ENCODE measurements at regions of chr3 and their contacts with region 1.

Region 1: DNA sequence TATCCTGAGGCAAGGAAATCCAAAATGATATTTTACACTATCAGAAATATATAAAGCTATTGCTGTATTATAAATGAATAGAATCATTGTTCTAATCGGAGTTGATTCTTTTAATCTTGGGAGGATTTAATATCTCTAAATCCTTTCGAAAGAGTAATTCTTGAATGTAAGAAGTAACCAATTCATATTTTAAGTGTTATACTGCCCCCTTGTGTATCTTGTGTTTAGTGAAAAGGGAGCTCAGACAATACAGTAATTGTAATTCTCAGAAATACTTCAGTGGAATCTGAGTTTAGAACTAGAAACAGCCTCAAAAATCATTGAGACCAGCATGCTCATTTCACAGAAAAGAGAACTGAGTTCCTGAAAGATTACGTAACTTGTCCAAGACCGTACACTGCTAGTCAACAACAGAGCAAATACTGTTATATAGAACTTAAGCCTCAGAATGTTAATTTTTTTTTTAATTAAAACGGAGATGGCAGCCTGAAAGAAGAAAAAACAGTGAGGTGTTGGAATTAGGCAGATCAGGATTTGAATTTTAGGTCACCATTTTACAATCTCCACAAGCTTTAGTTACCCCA is 42.9 kb downstream of the PLCH1 start:
- DNase-seq: no peak
- H3K4me3 Mint-ChIP-seq: no peak overlapping the region
- H3K27ac Mint-ChIP-seq: no peak overlapping the region
- H3K4me1 Mint-ChIP-seq: peaks cover 27% of the 10 kb centered on the region
- H3K27me3 Mint-ChIP-seq: no peaks in the 10 kb centered on the region
- CTCF ChIP-seq: peak; percentile 54

Region 2: DNA sequence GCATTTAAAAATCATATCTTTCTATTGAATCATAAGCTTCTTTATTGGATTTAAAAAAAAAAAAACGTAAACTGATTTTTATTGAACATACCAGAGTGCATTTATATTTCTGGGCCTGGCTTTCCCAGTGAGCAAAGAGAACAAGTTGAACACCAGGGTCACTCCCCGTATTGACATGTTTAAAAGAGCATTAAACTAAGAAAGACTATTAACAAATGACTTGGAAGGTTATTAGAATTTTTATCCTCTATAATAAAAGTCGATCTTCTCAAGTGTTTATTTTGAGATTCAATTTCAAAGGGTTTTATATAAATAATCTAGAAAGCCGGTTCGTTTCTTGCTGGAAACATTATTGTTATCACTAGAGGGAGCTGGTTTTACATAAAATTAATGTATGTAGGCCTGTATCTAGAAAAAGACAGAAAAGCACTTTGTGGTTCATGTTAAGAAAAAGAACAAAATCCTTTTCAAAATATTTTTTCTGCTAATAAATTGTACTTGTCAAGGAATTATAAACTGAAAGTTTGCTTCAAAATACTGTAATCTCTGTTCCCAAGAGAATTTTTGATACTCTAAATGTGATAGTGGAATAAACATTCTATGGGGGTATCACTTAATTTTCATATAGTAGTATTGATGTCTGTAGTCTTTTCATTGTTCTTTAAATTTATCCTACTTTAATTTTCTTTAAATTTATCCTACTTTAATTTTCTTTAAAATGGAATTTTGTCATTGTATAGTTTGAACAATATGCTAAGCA is 943.7 kb before region 1 on chr3:
- CTCF ChIA-PET with region 1: no interaction called
- intact Hi-C with region 1: loop called (anchors 2 kb)
- DNase-seq: no peak
- H3K4me3 Mint-ChIP-seq: no peak overlapping the region
- H3K27ac Mint-ChIP-seq: no peak overlapping the region
- H3K4me1 Mint-ChIP-seq: no peaks in the 10 kb centered on the region
- H3K27me3 Mint-ChIP-seq: no peaks in the 10 kb centered on the region
- CTCF ChIP-seq: no peak

Region 3: GRCh38 chr3:155352900-155353490 is 349.0 kb before region 1 on chr3:
- CTCF ChIA-PET with region 1: interaction called, 26 read pairs
- intact Hi-C with region 1: loop called (anchors 1 kb)
- DNase-seq: no peak
- H3K4me3 Mint-ChIP-seq: no peak overlapping the region
- H3K27ac Mint-ChIP-seq: no peak overlapping the region
- H3K4me1 Mint-ChIP-seq: no peaks in the 10 kb centered on the region
- H3K27me3 Mint-ChIP-seq: no peaks in the 10 kb centered on the region
- CTCF ChIP-seq: peak; percentile 77

Region 4: GRCh38 chr3:155411500-155412223 is 290.3 kb before region 1 on chr3:
- CTCF ChIA-PET with region 1: no interaction called
- intact Hi-C with region 1: loop called (anchors 1 kb)
- DNase-seq: peak; percentile 59
- H3K4me3 Mint-ChIP-seq: no peak overlapping the region
- H3K27ac Mint-ChIP-seq: no peak overlapping the region
- H3K4me1 Mint-ChIP-seq: peaks cover 4% of the 10 kb centered on the region
- H3K27me3 Mint-ChIP-seq: no peaks in the 10 kb centered on the region
- CTCF ChIP-seq: peak; percentile 15

Region 5: GRCh38 chr3:155554777-155555451 is 147.1 kb before region 1 on chr3:
- CTCF ChIA-PET with region 1: interaction called, 13 read pairs
- intact Hi-C with region 1: loop called (anchors 1 kb)
- DNase-seq: peak; percentile 73
- H3K4me3 Mint-ChIP-seq: peak overlapping the region; percentile 57
- H3K27ac Mint-ChIP-seq: peak overlapping the region; percentile 90
- H3K4me1 Mint-ChIP-seq: peaks cover 49% of the 10 kb centered on the region
- H3K27me3 Mint-ChIP-seq: no peaks in the 10 kb centered on the region
- CTCF ChIP-seq: no peak

Region 6: DNA sequence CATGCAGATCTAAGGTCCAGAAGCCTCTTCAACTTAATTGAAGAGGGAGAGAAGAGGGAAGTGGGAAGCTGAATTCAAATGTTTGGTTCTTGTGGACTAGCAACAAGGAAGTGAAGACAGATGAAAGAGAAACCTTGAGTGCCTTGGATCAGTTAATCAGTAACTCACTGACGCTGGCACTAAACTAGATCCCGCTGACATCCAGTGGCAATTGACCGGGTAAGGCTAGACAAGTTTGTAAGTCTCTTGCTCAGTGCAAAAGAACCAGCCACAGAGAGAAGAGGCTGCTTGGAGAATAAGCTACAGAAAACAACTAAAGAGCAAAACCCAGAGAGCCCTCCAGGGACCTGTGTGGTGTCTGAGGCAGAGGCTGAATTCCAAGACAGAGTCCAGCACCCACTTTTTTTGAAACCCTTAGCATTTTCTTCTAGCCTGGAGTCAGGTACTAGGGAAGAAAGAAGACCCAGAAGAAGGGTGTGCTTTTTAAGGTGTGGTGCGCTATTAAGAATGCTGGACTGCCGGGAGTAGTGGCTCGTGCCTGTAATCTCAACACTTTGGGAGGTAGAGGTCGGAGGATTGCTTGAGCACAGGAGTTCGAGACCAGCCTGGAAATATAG is 36.0 kb after region 1 on chr3:
- CTCF ChIA-PET with region 1: interaction called, 14 read pairs
- intact Hi-C with region 1: loop called (anchors 2 kb)
- DNase-seq: peak; percentile 88
- H3K4me3 Mint-ChIP-seq: peak overlapping the region; percentile 88
- H3K27ac Mint-ChIP-seq: peak overlapping the region; percentile 98
- H3K4me1 Mint-ChIP-seq: peaks cover 39% of the 10 kb centered on the region
- H3K27me3 Mint-ChIP-seq: no peaks in the 10 kb centered on the region
- CTCF ChIP-seq: no peak

Measured in Calu3 (cell line).